Posterior cingulate gyrus (tissue), 11 donors: ENCODE measurements at regions of chr6 and their contacts with region 1.

Region 1: GRCh38 chr6:25278914-25279747 is at the start of gene CARMIL1:
- DNase-seq: peak; percentile 47 to 97 (median 79)

Region 2: DNA sequence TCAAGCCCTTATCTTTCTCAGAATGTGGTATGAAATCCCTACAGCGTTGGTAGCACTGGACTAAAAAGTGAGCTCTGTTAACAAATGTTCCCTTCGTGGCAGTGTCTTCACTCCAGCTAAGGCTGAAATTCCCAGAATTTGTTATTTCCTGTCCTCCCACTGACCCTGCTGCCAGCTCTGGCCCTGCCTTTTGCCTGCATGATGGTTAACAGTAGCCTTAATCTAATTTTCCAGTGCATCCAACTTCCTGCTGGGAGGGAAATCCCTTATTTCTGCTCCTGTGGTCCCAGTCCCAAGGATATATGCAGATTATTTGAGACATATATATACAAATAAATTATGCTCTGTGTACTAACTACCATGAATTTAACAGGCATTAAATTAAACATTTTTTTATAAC is 157.1 kb before region 1 on chr6:
- intact Hi-C with region 1: no loop called
- DNase-seq: no peak

Region 3: GRCh38 chr6:25490018-25490801 is 211.1 kb after region 1 on chr6:
- intact Hi-C with region 1: loop called (anchors 5 kb)
- DNase-seq: peak in 9 of 10 donors; percentile 18 to 86 (median 57)

Region 4: GRCh38 chr6:25601800-25602673 is 322.9 kb after region 1 on chr6:
- intact Hi-C with region 1: loop called (anchors 5 kb)
- DNase-seq: no peak